Vagina (tissue), 2 donors: ENCODE measurements at regions of chr11 and their contacts with region 1.

Region 1: GRCh38 chr11:59615637-59616395 is at the start of gene OSBP:
- DNase-seq: peak; percentile 100
- H3K4me3 ChIP-seq: peak within 1 kb of the TSS; percentile 71 to 90
- H3K27ac ChIP-seq: peak within 1 kb of the TSS; percentile 92
- H3K4me1 ChIP-seq: peaks cover 50% of the 10 kb centered on the region
- H3K27me3 ChIP-seq: no peaks in the 10 kb centered on the region
- CTCF ChIP-seq: no peak
- POLR2A ChIP-seq: peak in 1 of 2 donors; percentile 90
- total RNA-seq, gene OSBP: 40.5 TPM

Region 2: DNA sequence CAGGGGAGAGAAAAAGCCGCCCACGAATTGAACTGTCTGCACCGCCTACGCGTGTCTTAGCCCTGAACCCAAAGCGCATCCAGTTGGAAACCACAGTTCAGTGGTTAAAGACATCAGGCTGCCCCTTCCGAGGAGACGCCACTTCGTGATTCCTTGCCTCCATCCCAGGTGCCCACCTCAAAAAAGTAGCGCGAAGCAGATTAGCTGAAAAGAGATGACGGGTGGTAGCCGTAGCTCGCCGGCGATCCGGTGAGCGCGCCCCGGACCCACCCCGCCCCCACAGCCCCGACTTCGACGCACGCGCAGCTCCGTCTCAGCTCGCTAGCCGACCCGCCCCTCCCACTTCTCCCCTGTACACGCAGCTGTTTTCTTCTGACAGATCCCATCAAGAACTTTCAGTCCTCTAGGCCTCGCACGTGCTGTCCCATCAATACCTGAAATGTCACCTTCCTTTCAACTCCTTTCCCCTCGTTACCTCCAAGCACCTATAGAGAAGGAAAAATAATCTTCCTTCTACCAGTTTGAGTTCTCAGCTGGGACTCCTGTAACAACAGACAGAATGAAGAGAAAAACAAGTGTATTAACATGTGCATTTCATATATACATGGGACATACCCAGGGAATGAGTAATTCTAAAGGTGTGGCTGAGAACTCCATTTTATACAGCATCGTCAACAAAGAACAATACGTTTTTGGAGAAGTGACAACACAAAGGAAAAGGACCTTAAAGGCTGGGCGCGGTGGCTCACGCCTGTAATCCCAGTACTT is 54.9 kb before region 1 on chr11:
- intact Hi-C with region 1: loop called (anchors 10 kb)
- DNase-seq: no peak
- H3K4me3 ChIP-seq: peak overlapping the region; percentile 68 to 83
- H3K27ac ChIP-seq: peak overlapping the region; percentile 98
- H3K4me1 ChIP-seq: peaks cover 21% of the 10 kb centered on the region
- H3K27me3 ChIP-seq: no peaks in the 10 kb centered on the region
- CTCF ChIP-seq: no peak
- POLR2A ChIP-seq: peak in 1 of 2 donors; percentile 26

Region 3: GRCh38 chr11:59668950-59669610 is 53.3 kb after region 1 on chr11 and contains the start of gene PATL1:
- intact Hi-C with region 1: loop called (anchors 2 kb)
- DNase-seq: peak; percentile 98 to 99
- H3K4me3 ChIP-seq: peak within 1 kb of the TSS; percentile 85 to 95
- H3K27ac ChIP-seq: peak within 1 kb of the TSS; percentile 99
- H3K4me1 ChIP-seq: peaks cover 28% of the 10 kb centered on the region
- H3K27me3 ChIP-seq: no peaks in the 10 kb centered on the region
- CTCF ChIP-seq: no peak
- POLR2A ChIP-seq: peak; percentile 43 to 96
- total RNA-seq, gene PATL1: 14.5 TPM